OCI-LY7 (cell line): ENCODE measurements at regions of chr17 and their contacts with region 1.

Region 1: GRCh38 chr17:17523001-17523730 is 27.0 kb upstream of the RASD1 start:
- DNase-seq: no peak
- H3K4me3 ChIP-seq: no peak overlapping the region
- H3K27ac ChIP-seq: no peak overlapping the region
- H3K4me1 ChIP-seq: no peaks in the 10 kb centered on the region
- CTCF ChIP-seq: no peak

Region 2: GRCh38 chr17:17289701-17290100 is 233.5 kb before region 1 on chr17:
- CTCF ChIA-PET with region 1: no interaction called
- POLR2A ChIA-PET with region 1: no interaction called
- intact Hi-C with region 1: no loop called
- DNase-seq: no peak
- H3K4me3 ChIP-seq: no peak overlapping the region
- H3K27ac ChIP-seq: no peak overlapping the region
- H3K4me1 ChIP-seq: no peaks in the 10 kb centered on the region
- CTCF ChIP-seq: no peak

Region 3: GRCh38 chr17:17538417-17539391 is 15.5 kb after region 1 on chr17:
- CTCF ChIA-PET with region 1: interaction called, 13 read pairs
- POLR2A ChIA-PET with region 1: interaction called, 5 read pairs
- intact Hi-C with region 1: no loop called
- DNase-seq: no peak
- H3K4me3 ChIP-seq: no peak overlapping the region
- H3K27ac ChIP-seq: no peak overlapping the region
- H3K4me1 ChIP-seq: no peaks in the 10 kb centered on the region
- CTCF ChIP-seq: no peak